Mammary epithelial cell (primary cell): ENCODE measurements at regions of chr17 and their contacts with region 1.

Region 1: DNA sequence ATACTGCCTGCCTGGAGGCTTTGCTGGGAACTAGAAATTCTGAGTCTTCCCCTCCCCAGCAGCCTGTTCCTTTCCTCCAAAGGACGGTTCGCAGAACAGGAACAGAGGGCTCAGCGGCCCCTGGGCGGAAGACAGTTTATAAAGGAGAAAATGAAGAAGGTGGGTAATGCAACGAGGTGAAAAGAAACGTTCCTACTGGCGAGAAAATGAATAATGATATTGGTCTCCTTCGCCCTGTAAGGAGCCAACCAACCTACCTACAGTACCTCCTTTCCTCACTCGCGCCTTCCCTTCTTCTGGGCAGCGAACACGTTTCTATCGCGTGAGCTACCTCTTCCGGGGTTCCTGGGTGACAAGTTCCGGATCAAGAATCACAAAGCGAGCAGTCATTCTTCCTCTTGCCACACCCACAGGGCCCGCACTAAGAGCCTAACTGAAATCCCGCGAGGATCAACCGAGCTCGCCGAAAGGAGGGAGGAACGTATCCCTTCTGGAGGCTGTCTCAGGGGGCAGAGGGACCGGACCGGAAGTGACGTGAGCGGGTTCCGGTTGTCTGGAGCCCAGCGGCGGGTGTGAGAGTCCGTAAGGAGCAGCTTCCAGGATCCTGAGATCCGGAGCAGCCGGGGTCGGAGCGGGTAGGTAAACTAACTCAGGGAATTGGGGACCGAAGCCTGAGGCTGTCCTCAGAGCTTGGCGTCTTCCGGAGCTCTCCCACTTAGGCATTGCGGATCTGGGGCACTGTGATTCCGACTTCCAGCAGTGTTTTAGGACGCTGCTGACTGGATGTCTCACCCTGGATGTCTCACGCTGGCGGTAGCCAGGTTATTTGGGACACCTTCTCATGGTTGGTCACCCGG is at the starts of genes PTRH2 and VMP1:
- DNase-seq: peak; percentile 100
- H3K4me3 ChIP-seq: peak within 1 kb of the TSS; percentile 83 to 95 (median 88)
- H3K27ac ChIP-seq: peak within 1 kb of the TSS; percentile 97
- H3K4me1 ChIP-seq: peaks cover 15% of the 10 kb centered on the region
- H3K27me3 ChIP-seq: no peaks in the 10 kb centered on the region
- CTCF ChIP-seq: no peak
- total RNA-seq, gene PTRH2: 23.0 to 37.4 TPM
- total RNA-seq, gene VMP1: 177 to 211 TPM

Region 2: DNA sequence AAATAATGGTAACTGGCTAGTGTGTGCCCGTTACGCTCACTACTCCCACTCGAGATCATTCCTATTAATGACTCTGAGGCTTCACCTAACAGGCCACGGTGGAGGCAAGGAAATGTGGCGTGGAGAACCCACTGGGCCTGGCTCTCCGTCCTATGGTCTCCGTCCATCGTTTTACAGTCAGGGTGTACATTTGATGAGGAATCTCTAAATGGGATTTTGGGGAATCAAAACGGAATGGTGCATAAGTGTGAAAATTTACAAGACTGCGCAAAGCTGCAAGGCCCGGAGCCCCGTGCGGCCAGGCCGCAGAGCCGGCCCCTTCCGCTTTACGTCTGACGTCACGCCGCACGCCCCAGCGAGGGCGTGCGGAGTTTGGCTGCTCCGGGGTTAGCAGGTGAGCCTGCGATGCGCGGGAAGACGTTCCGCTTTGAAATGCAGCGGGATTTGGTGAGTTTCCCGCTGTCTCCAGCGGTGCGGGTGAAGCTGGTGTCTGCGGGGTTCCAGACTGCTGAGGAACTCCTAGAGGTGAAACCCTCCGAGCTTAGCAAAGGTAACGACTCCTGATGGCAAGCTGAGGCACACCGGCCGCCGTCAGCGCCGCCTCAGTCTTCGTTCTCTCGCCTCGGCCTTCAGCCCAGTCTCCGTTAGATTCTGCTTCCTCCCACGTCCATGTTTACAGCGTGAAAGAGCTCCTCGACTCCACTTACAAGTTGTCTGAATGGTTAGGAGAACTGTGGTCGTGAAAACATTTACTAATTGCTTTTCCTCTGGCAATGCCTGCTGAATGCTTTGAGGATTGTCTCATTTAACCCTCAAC is 1014.9 kb before region 1 on chr17 and contains the start of gene RAD51C:
- CTCF ChIA-PET with region 1: interaction called, 16 read pairs
- dilution Hi-C with region 1: no loop called
- in situ Hi-C with region 1: no loop called
- intact Hi-C with region 1: no loop called
- DNase-seq: peak; percentile 81
- H3K4me3 ChIP-seq: peak within 1 kb of the TSS; percentile 52 to 85 (median 74)
- H3K27ac ChIP-seq: peak within 1 kb of the TSS; percentile 76
- H3K4me1 ChIP-seq: peaks cover 11% of the 10 kb centered on the region
- H3K27me3 ChIP-seq: no peaks in the 10 kb centered on the region
- CTCF ChIP-seq: no peak
- total RNA-seq, gene RAD51C: 20.8 to 55.6 TPM

Region 3: GRCh38 chr17:59746849-59747445 is 39.6 kb after region 1 on chr17:
- CTCF ChIA-PET with region 1: interaction called, 14 read pairs
- dilution Hi-C with region 1: no loop called
- in situ Hi-C with region 1: no loop called
- intact Hi-C with region 1: no loop called
- DNase-seq: peak; percentile 37
- H3K4me3 ChIP-seq: no peak overlapping the region
- H3K27ac ChIP-seq: no peak overlapping the region
- H3K4me1 ChIP-seq: no peaks in the 10 kb centered on the region
- H3K27me3 ChIP-seq: no peaks in the 10 kb centered on the region
- CTCF ChIP-seq: peak; percentile 48 to 63

Region 4: DNA sequence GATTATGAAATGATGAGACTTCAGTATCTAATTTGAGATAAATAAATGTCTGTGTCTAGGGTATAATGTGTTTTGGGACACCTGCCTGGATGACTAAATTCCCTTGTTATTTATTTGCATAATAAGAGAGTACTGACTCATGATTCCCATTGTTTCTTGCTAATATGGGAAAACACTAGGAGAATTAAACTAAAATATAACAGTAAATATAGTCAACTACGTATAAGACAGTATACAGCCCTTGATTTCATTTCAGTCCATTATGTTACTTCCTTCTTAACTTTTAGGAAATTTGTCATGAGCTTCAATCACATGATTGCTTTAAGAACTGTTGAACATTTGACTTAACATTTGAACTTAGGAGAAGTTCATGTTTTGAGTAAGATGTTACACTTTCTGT is 62.5 kb after region 1 on chr17:
- CTCF ChIA-PET with region 1: no interaction called
- dilution Hi-C with region 1: loop called (anchors 10 kb)
- in situ Hi-C with region 1: no loop called
- intact Hi-C with region 1: no loop called
- DNase-seq: peak; percentile 70
- H3K4me3 ChIP-seq: no peak overlapping the region
- H3K27ac ChIP-seq: peak overlapping the region; percentile 92
- H3K4me1 ChIP-seq: peaks cover 7% of the 10 kb centered on the region
- H3K27me3 ChIP-seq: no peaks in the 10 kb centered on the region
- CTCF ChIP-seq: no peak